SK-MEL-5 (cell line): ENCODE measurements at regions of chr17 and their contacts with region 1.

Region 1: DNA sequence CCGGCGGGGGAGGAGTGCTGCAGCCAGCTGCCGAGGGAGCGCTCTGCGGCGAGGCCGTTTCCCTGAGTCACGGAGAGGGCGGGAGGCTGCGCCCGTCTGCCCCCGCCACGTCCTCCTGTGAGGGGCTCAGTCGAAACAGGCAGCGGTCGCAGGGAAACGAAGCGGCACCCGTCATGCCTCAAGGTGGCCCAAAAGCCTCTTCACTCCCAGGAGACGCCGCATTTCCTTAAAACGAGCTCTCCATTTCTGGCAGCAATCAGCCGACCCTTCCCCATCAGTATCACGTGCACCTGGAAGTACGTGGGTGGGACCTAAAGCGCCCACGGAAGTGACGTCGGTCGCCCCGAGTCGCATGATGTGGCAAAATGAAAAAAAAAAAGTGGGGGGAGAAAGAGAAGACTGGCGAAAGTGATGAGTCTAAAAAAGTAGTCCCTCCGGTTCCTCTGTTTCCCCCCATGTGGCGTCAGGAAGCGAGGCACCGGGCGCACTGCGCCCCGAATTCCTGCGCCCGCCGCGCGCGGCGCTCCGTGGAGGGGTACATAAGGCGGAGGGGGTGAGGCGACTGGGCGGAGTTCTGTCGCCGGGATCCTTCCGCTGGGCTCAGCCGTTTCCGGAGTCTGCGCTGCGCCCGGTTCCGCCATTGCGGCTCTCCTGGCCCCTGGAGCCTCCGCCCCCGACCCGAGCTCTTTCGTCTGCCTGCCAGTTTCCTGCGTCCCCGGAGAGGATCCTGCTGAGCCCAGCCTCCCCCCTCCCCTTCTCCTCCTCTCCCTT is at the start of gene CLTC:
- DNase-seq: peak; percentile 99
- total RNA-seq, gene CLTC: 471 and 485 TPM in 2 replicates

Region 2: GRCh38 chr17:59373555-59374495 is 245.7 kb before region 1 on chr17:
- in situ Hi-C with region 1: no loop called
- DNase-seq: peak; percentile 82

Region 3: DNA sequence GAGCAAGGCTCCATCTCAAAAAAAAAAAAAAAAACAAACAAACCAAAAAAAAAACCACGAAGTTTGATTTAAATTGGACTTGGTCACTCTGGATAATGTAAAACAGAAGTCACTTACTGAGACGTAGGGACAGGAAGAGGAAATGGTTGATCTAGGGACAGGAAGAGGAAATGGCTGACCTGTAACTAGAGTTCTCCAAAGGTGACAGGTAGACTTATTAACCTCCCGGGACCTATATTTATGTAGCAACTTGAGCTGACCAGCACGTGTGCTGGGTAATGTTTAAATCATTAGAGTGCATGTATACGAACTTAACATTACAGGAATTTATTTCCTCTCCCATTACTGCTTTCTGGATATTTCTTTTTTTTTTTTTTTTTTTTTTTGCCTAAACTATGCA is 135.6 kb before region 1 on chr17:
- in situ Hi-C with region 1: no loop called
- DNase-seq: no peak

Region 4: GRCh38 chr17:59521204-59522126 is 98.0 kb before region 1 on chr17:
- in situ Hi-C with region 1: no loop called
- DNase-seq: peak; percentile 92

Region 5: GRCh38 chr17:59668816-59669215 is 49.3 kb after region 1 on chr17:
- in situ Hi-C with region 1: loop called (anchors 5 kb)
- DNase-seq: no peak